ENCODE measurements at regions of chr7 and their contacts with region 1.

Region 1: GRCh38 chr7:94907026-94907810 is at the start of gene PPP1R9A:
- DNase-seq: peak; percentile 75
- total RNA-seq, gene PPP1R9A: 42.8 TPM

Region 2: GRCh38 chr7:95045236-95045923 is 138.2 kb after region 1 on chr7:
- intact Hi-C with region 1: loop called (anchors 5 kb)
- DNase-seq: no peak

Region 3: DNA sequence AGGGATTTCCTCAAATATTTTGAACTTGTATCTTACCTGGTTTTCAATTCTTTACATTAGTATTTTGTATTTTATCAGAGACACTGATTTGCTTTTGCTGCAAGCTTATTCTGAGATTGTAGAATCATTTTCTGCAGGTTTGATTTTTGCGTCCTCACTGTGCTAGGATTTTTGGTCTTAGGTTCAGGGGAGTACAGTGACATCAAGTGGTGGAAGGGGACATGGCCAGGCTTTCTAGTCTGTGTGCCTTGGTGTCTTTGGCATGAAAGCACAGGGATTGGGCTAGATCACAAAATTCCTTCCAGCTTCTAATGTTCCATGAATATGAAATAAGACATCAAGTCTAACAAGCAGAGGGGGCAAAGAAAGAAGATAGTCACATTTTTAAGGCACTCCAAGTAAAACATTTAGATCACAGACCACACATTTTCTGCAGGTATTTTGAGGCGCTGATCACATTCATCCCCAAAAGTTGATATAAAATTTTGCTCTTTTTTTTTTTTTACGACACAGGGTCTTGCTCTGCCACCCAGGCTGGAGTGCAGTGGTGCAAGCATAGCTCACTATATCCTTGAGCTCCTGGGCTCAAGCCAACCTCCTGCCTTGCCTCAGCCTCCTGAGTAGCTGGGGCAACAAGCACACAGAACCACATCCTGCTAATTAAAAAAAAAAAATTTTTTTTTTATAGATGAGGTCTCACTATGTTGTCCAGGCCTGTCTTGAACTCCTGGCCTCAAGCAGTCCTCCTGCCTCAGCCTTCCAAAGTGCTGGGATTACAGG is 292.8 kb after region 1 on chr7:
- intact Hi-C with region 1: loop called (anchors 5 kb)
- DNase-seq: no peak